ENCODE measurements at regions of chr9 and their contacts with region 1.

Region 1: GRCh38 chr9:5832543-5833529 is at the start of gene ERMP1:
- DNase-seq: peak; percentile 88
- ATAC-seq: peak; percentile 88
- H3K4me3 Mint-ChIP-seq: peak within 1 kb of the TSS; percentile 90
- H3K27ac Mint-ChIP-seq: peak within 1 kb of the TSS; percentile 83
- H3K4me1 Mint-ChIP-seq: peaks cover 33% of the 10 kb centered on the region
- H3K27me3 Mint-ChIP-seq: no peaks in the 10 kb centered on the region
- CTCF ChIP-seq: peak; percentile 22
- total RNA-seq, gene ERMP1: 7.3 and 7.5 TPM in 2 replicates

Region 2: GRCh38 chr9:5608298-5609225 is 224.3 kb before region 1 on chr9:
- CTCF ChIA-PET with region 1: no interaction called
- POLR2A ChIA-PET with region 1: no interaction called
- intact Hi-C with region 1: loop called (anchors 5 kb)
- DNase-seq: no peak
- ATAC-seq: peak; percentile 78
- H3K4me3 Mint-ChIP-seq: peak overlapping the region; percentile 80
- H3K27ac Mint-ChIP-seq: peak overlapping the region; percentile 85
- H3K4me1 Mint-ChIP-seq: peaks cover 30% of the 10 kb centered on the region
- H3K27me3 Mint-ChIP-seq: no peaks in the 10 kb centered on the region
- CTCF ChIP-seq: no peak

Region 3: GRCh38 chr9:6015278-6016157 is 182.7 kb after region 1 on chr9 and contains the start of gene RANBP6:
- CTCF ChIA-PET with region 1: no interaction called
- POLR2A ChIA-PET with region 1: no interaction called
- intact Hi-C with region 1: loop called (anchors 2 kb)
- DNase-seq: peak; percentile 82
- ATAC-seq: peak; percentile 99
- H3K4me3 Mint-ChIP-seq: peak within 1 kb of the TSS; percentile 99
- H3K27ac Mint-ChIP-seq: peak within 1 kb of the TSS; percentile 97
- H3K4me1 Mint-ChIP-seq: peaks cover 39% of the 10 kb centered on the region
- H3K27me3 Mint-ChIP-seq: no peaks in the 10 kb centered on the region
- CTCF ChIP-seq: no peak
- total RNA-seq, gene RANBP6: 21.6 and 22.5 TPM in 2 replicates